Prostate gland (tissue), 2 donors: ENCODE measurements at regions of chr1 and their contacts with region 1.

Region 1: DNA sequence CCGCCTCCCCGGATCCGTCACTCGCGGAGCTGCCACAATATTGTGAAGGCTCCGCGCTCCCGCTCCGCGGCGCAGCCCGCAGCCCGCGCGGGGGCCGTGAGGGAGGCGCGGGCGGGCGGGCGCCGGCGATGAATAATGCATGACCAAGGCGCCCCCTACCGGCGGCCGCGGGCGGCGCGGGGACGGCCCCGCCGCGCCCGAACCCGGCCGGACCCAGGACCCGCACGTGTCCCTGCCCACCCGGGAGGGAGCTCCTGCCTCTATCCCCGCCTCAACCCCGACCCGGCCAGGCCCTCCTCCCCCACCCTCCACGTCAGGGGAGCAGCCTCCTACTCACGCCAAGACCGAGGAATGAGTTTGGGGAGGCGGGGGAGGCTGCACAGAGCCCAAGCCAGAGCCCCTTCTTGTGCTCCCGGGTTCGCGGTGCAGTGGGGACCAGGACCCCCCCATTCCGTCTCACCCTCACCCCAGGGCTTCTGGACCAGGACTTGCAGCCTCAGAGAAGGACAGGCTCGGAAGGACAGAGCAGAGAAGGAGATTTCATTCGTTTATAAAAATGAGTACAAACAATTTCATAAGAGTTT is 70.8 kb upstream of the CASZ1 start:
- DNase-seq: peak; percentile 61
- H3K4me3 ChIP-seq: peak overlapping the region; percentile 44 to 57
- H3K27ac ChIP-seq: peak overlapping the region; percentile 69 to 78
- H3K4me1 ChIP-seq: no peaks in the 10 kb centered on the region
- H3K27me3 ChIP-seq: no peaks in the 10 kb centered on the region
- CTCF ChIP-seq: peak; percentile 86 to 94 (median 92)
- POLR2A ChIP-seq: no peak

Region 2: GRCh38 chr1:10430216-10431069 is 436.8 kb before region 1 on chr1 and contains the start of gene CENPS:
- intact Hi-C with region 1: loop called (anchors 5 kb)
- DNase-seq: peak; percentile 83
- H3K4me3 ChIP-seq: peak within 1 kb of the TSS; percentile 66 to 86
- H3K27ac ChIP-seq: peak within 1 kb of the TSS; percentile 66 to 74
- H3K4me1 ChIP-seq: peaks cover 5% of the 10 kb centered on the region
- H3K27me3 ChIP-seq: no peaks in the 10 kb centered on the region
- CTCF ChIP-seq: peak; percentile 98 to 99 (median 98)
- POLR2A ChIP-seq: peak; percentile 33
- total RNA-seq, gene CENPS: 21.8 to 34.8 TPM

Region 3: GRCh38 chr1:10507111-10507879 is 359.9 kb before region 1 on chr1:
- intact Hi-C with region 1: loop called (anchors 5 kb)
- DNase-seq: peak; percentile 71
- H3K4me3 ChIP-seq: no peak overlapping the region
- H3K27ac ChIP-seq: peak overlapping the region in 1 of 2 donors; percentile 6
- H3K4me1 ChIP-seq: peaks cover 10% of the 10 kb centered on the region
- H3K27me3 ChIP-seq: no peaks in the 10 kb centered on the region
- CTCF ChIP-seq: peak; percentile 51 to 89 (median 78)
- POLR2A ChIP-seq: no peak

Region 4: DNA sequence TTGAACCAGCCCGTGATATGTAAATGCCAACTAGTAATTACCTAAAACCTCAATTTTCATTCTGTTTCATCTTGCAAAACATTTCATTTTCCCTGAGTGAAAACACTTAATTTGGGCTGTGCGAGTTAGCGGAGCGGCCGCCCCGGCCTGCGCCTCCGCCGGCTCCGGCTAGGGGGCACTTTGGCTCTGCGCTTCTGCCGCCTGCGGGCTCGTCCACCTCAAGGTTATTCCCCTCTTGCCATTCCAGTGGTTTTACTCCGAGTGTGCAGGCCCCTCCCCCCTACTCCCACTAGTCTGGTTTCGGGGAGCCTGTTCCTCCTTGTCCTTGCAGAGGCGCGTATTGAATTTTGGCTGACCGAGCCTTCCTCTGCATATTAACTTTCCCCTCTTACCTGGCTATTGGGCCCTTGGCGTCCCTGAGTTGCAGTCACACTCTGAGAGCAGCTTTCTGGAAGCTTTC is 336.9 kb before region 1 on chr1:
- intact Hi-C with region 1: loop called (anchors 5 kb)
- DNase-seq: peak; percentile 64
- H3K4me3 ChIP-seq: no peak overlapping the region
- H3K27ac ChIP-seq: peak overlapping the region; percentile 41 to 52
- H3K4me1 ChIP-seq: peaks cover 5% of the 10 kb centered on the region
- H3K27me3 ChIP-seq: no peaks in the 10 kb centered on the region
- CTCF ChIP-seq: peak; percentile 36 to 87 (median 66)
- POLR2A ChIP-seq: no peak

Region 5: DNA sequence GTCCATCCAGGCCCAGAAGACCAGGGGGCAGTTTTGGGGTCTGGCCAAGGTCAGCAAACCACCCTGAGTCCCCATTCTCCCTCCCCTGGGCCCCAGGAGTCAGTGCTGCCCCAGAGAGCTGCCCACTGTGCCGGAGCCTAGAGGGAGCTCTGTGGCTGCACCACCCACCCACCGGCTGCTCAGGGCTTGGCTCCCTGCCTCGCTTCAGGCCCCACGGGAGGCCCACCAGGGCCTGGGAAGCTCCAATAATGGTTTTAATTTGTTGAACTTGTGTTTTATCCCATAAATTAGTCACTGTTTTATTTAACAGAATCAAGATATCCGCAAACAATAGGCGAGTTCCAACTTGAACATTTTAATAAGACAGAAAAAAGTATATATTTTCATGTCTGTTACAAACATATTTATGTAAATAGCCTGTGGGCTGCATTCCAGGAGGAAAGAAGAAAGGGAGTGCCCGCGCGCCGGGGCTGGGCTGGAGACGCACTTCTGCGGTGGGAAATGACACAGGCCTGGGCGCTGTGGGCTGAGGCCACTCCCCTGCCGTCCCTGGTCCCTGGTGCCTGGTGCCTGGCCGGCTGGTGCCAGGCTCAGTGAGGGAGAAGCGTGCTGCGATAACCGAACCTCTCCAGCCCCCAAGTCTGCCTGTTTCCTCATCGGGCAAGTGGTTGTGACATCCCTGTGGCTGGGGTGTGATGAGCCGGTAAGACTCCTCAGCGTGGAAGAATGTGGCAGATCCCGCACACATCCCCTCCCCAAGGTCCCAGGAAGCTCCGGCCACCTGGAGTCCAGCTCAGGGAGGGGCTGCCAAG is 231.9 kb before region 1 on chr1:
- intact Hi-C with region 1: loop called (anchors 10 kb)
- DNase-seq: peak; percentile 95
- H3K4me3 ChIP-seq: no peak overlapping the region
- H3K27ac ChIP-seq: peak overlapping the region; percentile 95 to 98
- H3K4me1 ChIP-seq: peaks cover 64% of the 10 kb centered on the region
- H3K27me3 ChIP-seq: no peaks in the 10 kb centered on the region
- CTCF ChIP-seq: peak in 1 of 4 experiments; percentile 21
- POLR2A ChIP-seq: peak; percentile 58

Region 6: GRCh38 chr1:10694633-10695627 is 172.3 kb before region 1 on chr1:
- intact Hi-C with region 1: loop called (anchors 10 kb)
- DNase-seq: peak; percentile 91
- H3K4me3 ChIP-seq: peak overlapping the region; percentile 43 to 67
- H3K27ac ChIP-seq: peak overlapping the region; percentile 91 to 94
- H3K4me1 ChIP-seq: peaks cover 40% of the 10 kb centered on the region
- H3K27me3 ChIP-seq: no peaks in the 10 kb centered on the region
- CTCF ChIP-seq: peak in 1 of 4 experiments; percentile 5
- POLR2A ChIP-seq: no peak

Region 7: DNA sequence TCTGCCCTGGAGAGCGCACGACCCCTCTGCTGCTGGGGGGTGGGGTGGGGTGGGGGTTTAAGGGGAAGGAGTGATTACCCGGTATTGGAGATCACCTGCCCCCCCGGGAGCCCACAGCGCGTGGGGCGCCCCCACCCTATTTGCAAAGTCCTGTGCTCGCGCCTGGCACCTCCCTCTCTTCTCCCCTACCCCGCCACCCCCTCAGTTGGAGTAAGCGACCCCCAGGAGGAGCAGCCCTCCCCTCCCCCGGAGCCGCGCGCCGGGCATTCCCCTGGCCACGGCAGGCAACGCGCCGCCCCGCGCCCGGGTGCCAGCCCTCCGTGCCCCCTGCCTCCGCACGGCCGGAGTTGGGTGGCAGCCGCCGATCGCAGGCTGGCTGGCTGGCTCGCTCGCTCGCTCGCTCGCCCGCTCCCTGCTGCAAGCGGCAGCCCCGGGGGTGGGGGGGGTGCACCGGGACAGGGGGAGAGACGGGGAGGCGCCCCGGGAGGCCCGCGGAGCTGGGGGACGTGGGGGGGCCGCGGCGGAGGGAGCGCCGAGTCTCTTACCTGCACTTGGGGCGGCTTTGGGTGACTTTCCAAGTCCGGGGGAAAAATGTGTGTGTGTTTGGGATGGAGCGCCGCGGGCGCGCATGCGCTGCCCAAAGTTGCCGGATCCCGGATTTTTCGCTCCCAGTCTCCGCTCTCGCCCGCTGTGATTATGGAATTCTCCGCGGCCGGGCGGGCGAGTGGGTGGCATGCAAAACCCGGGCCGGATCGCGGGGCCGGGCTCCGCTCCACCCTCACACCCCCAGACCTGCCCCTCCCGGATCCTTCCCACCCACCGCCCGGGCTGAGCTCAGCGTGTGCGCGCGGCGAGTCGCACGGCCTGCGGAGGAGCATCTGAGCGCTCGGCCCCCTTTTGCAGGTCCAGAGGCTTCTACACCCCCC is 70.9 kb before region 1 on chr1 and contains the start of gene CASZ1:
- intact Hi-C with region 1: loop called (anchors 2 kb)
- DNase-seq: peak; percentile 89
- H3K4me3 ChIP-seq: peak within 1 kb of the TSS; percentile 68 to 85
- H3K27ac ChIP-seq: peak within 1 kb of the TSS; percentile 92 to 96
- H3K4me1 ChIP-seq: peaks cover 7% of the 10 kb centered on the region
- H3K27me3 ChIP-seq: no peaks in the 10 kb centered on the region
- CTCF ChIP-seq: peak in 2 of 4 experiments; percentile 22 to 40
- POLR2A ChIP-seq: peak; percentile 85
- total RNA-seq, gene CASZ1: 90.9 to 96.9 TPM

Region 8: GRCh38 chr1:11214698-11215380 is 347.6 kb after region 1 on chr1:
- intact Hi-C with region 1: no loop called
- DNase-seq: no peak
- H3K4me3 ChIP-seq: no peak overlapping the region
- H3K27ac ChIP-seq: no peak overlapping the region
- H3K4me1 ChIP-seq: no peaks in the 10 kb centered on the region
- H3K27me3 ChIP-seq: no peaks in the 10 kb centered on the region
- CTCF ChIP-seq: no peak
- POLR2A ChIP-seq: no peak